ENCODE measurements at regions of chr11 and their contacts with region 1.

Region 1: DNA sequence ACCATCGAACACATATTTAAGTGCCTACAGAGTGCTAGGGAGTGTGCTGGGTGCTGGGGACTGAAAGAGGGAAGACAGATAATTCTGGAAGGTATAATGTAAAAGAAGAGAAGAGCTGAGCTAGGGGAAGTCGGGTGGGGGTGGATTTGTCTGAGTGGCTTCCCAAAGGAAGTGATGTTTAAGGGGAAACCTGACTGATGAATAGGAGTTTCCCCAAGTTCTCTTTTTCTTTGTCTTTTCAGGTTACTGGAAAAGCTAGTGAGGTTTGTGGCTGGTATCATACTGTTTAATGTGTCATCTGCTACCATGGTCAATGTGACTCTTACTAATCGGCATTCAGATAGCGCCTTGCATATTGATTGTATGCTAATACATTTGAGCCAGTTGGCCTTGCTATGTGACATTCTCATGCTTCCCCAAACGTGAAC is 151.6 kb upstream of the MTMR2 start:
- DNase-seq: peak; percentile 63
- H3K4me3 Mint-ChIP-seq: peak overlapping the region; percentile 2
- H3K27ac Mint-ChIP-seq: peak overlapping the region; percentile 93
- H3K4me1 Mint-ChIP-seq: peaks cover 85% of the 10 kb centered on the region
- H3K27me3 Mint-ChIP-seq: no peaks in the 10 kb centered on the region

Region 2: DNA sequence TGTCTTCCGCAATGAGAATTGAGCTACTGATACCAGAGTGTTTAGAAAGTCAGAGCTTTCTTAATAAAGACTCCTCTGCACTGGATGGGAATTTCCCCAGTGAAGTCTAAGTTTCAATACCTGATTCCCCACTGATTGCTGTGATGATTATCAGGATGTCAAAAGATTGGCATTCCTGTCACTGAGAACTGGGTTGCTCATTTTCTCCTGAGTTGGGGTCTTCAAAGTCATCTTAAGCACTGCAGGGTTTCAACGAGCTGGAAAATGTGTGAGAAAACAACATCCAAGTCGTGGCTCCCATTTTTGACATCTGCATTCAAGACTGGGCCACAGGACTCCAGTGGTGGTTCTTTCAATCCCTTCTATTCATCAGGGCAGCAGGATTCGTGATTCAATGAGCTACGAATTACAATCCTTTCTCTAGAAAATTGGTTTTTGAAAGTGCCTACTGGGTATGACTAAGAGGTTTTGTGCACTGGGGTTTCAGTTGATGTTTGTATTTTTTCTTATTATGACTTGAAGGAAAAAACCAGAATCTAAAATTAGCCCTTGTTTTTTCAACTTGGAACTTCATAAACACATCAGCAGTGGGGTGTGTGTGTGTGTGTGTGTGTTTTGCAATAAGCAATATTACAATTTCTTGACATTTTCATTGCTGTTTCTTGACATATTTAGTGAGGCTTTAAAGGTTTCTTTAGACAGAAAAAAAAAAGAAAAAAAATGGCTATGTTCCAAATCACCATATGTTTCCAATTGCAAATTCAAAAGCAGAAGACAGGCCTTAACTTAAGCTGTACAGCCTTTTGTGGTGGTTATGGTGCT is 519.0 kb before region 1 on chr11:
- CTCF ChIA-PET with region 1: no interaction called
- intact Hi-C with region 1: no loop called
- DNase-seq: peak; percentile 66
- H3K4me3 Mint-ChIP-seq: no peak overlapping the region
- H3K27ac Mint-ChIP-seq: peak overlapping the region; percentile 83
- H3K4me1 Mint-ChIP-seq: peaks cover 22% of the 10 kb centered on the region
- H3K27me3 Mint-ChIP-seq: no peaks in the 10 kb centered on the region

Region 3: DNA sequence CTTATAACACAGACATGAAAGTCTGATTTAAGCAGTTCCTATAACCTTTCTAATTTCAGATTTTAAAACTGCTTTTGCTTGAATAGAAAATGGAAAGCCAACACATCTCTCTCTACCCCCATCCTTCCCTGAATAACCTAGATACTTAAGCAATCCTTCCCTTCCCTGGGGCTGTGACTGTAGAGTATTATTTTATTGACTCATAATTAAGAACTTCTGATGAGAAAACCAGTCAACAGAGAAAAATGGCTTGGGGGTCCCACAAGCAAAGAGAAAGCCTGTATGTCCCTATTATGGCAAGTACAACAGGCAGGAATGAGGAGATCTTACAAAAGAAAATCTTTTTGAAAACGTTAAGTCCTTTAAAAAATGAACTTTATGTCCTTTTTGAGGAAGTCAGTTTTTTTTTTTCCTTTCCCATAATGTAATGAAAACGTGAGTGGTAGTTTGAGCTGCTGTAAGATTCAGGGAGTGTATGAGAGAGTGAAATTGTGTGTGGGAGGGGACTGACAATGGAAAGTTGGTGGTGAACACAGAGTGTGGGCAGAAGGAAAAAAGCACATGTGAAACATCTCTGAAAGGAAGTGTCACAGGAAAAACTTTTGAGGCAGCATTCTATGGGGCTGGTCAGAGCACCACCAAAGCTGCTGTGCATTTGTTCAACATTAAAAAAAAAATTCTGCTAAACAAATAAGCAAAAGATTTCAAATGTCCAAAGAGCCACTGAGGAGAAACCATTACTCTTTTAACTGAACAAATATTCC is 112.9 kb after region 1 on chr11:
- CTCF ChIA-PET with region 1: no interaction called
- intact Hi-C with region 1: loop called (anchors 2 kb)
- DNase-seq: peak; percentile 49
- H3K4me3 Mint-ChIP-seq: peak overlapping the region; percentile 38
- H3K27ac Mint-ChIP-seq: peak overlapping the region; percentile 92
- H3K4me1 Mint-ChIP-seq: peaks cover 90% of the 10 kb centered on the region
- H3K27me3 Mint-ChIP-seq: no peaks in the 10 kb centered on the region

Measured in activated naive CD4-positive, alpha-beta T cell treated with anti-CD3 and anti-CD28 coated beads for 36 hours (primary cell).